ENCODE measurements at regions of chr19 and their contacts with region 1.

Region 1: GRCh38 chr19:50368649-50369570 is 3.5 kb upstream of the NAPSA start:
- DNase-seq: peak; percentile 88
- ATAC-seq: peak; percentile 97

Region 2: GRCh38 chr19:50414864-50415660 is 46.2 kb after region 1 on chr19:
- intact Hi-C with region 1: loop called (anchors 5 kb)
- DNase-seq: peak; percentile 88
- ATAC-seq: peak; percentile 86

Region 3: GRCh38 chr19:50461066-50461875 is 92.4 kb after region 1 on chr19:
- intact Hi-C with region 1: loop called (anchors 5 kb)
- DNase-seq: peak; percentile 60
- ATAC-seq: peak; percentile 86

Region 4: GRCh38 chr19:50556282-50557008 is 187.5 kb after region 1 on chr19:
- intact Hi-C with region 1: no loop called
- DNase-seq: peak; percentile 86
- ATAC-seq: peak; percentile 85

Region 5: DNA sequence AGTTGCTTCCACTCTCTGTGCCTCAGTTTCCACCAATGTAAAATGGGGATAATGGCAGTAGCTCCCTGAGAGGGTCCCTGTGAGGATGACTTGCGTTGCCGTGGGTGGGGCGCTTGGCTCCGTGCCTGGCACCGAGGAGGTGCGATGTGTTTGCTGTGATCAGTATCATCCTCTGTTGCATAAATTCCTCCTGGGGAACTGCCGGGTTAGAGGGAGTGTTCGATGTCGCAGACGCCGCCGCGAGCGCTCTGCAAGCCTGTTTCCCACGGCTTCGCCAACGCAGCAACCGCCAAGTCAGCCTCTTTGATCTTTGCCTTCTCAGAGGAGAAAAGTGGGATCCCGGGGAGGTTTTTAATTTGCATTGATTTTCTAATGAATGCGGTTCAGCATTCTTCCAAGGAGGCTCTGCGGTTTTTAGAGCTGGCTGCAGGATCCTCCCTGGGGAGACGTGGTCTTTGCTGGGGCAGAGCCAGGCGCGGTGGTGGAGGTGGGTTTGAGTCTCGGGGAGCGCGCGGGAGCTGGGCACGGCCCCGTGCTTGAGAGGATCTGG is 408.9 kb after region 1 on chr19:
- intact Hi-C with region 1: loop called (anchors 5 kb)
- DNase-seq: no peak
- ATAC-seq: no peak

Region 6: GRCh38 chr19:50922317-50922853 is 553.5 kb after region 1 on chr19:
- intact Hi-C with region 1: loop called (anchors 10 kb)
- DNase-seq: peak; percentile 63
- ATAC-seq: peak; percentile 90